Activated CD4-positive, alpha-beta memory T cell treated with anti-CD3 and anti-CD28 coated beads, Interleukin-2, amount 10 ng/mL, durations not matched to agents 7 days and 5 days (primary cell): ENCODE measurements at regions of chr19 and their contacts with region 1.

Region 1: GRCh38 chr19:17346109-17346671 is 8.8 kb downstream of the GTPBP3 start:
- DNase-seq: peak; percentile 82
- H3K4me3 Mint-ChIP-seq: no peak overlapping the region
- H3K27ac Mint-ChIP-seq: no peak overlapping the region
- H3K4me1 Mint-ChIP-seq: peaks cover 8% of the 10 kb centered on the region
- H3K27me3 Mint-ChIP-seq: peaks cover 19% of the 10 kb centered on the region

Region 2: GRCh38 chr19:17205237-17206140 is 140.7 kb before region 1 on chr19:
- CTCF ChIA-PET with region 1: no interaction called
- POLR2A ChIA-PET with region 1: no interaction called
- DNase-seq: peak; percentile 69
- H3K4me3 Mint-ChIP-seq: no peak overlapping the region
- H3K27ac Mint-ChIP-seq: no peak overlapping the region
- H3K4me1 Mint-ChIP-seq: peaks cover 16% of the 10 kb centered on the region
- H3K27me3 Mint-ChIP-seq: no peaks in the 10 kb centered on the region

Region 3: GRCh38 chr19:17390665-17391370 is 44.6 kb after region 1 on chr19:
- CTCF ChIA-PET with region 1: interaction called, 18 read pairs
- POLR2A ChIA-PET with region 1: no interaction called
- DNase-seq: peak; percentile 86
- H3K4me3 Mint-ChIP-seq: peak overlapping the region; percentile 76
- H3K27ac Mint-ChIP-seq: no peak overlapping the region
- H3K4me1 Mint-ChIP-seq: peaks cover 27% of the 10 kb centered on the region
- H3K27me3 Mint-ChIP-seq: peaks cover 27% of the 10 kb centered on the region